CD4-positive, alpha-beta memory T cell (primary cell): ENCODE measurements at regions of chr16 and their contacts with region 1.

Region 1: DNA sequence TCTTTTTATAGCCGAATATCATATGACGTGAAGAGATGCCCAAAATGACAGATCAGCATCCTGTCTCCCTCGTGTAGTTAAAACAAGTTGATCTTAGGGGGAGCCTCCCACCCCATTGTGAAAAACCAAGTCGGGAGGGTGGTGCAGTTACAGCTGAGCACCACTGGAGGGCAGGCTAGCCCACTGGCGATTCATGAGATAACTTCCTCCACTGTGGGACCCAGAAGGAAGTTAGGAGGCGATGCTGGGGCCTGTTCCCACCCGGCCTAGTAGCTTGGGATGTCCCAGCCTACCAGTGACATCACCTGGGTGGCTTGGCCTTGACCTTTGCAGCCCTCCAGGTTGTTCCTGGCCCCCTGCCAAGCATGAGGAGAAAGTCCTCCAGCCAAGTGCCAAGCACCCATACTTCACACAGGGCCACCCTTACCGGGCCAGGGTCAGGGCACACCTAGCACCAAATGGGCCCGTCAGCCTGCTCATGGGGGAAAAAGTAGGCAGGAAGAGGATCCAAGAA is 8.1 kb upstream of the CPNE2 start:
- DNase-seq: peak; percentile 78 to 81 (median 79)
- H3K4me3 ChIP-seq: no peak overlapping the region
- H3K4me3 Mint-ChIP-seq: peak overlapping the region in 1 of 8 donors; percentile 30
- H3K27ac ChIP-seq: peak overlapping the region; percentile 29
- H3K27ac Mint-ChIP-seq: peak overlapping the region; percentile 85 to 95 (median 91)
- H3K4me1 ChIP-seq: peaks cover 10% of the 10 kb centered on the region
- H3K4me1 Mint-ChIP-seq: peaks cover 5 to 18% (median 11%) of the 10 kb centered on the region in 4 donors
- H3K27me3 ChIP-seq: no peaks in the 10 kb centered on the region
- H3K27me3 Mint-ChIP-seq: no peaks in the 10 kb centered on the region

Region 2: GRCh38 chr16:56988948-56989945 is 95.1 kb before region 1 on chr16 and contains the start of gene NLRC5:
- CTCF ChIA-PET with region 1: interaction called, 8 read pairs
- POLR2A ChIA-PET with region 1: interaction called, 10 read pairs
- intact Hi-C with region 1: no loop called
- DNase-seq: peak; percentile 85 to 94 (median 89)
- H3K4me3 ChIP-seq: peak within 1 kb of the TSS; percentile 85 to 91
- H3K4me3 Mint-ChIP-seq: peak within 1 kb of the TSS; percentile 94 to 100 (median 99)
- H3K27ac ChIP-seq: peak within 1 kb of the TSS; percentile 97
- H3K27ac Mint-ChIP-seq: peak within 1 kb of the TSS; percentile 89 to 100 (median 98)
- H3K4me1 ChIP-seq: peaks cover 72% of the 10 kb centered on the region
- H3K4me1 Mint-ChIP-seq: peaks cover 50 to 96% (median 64%) of the 10 kb centered on the region in 4 donors
- H3K27me3 ChIP-seq: no peaks in the 10 kb centered on the region
- H3K27me3 Mint-ChIP-seq: no peaks in the 10 kb centered on the region
- total RNA-seq, gene NLRC5: 416 to 457 TPM

Region 3: DNA sequence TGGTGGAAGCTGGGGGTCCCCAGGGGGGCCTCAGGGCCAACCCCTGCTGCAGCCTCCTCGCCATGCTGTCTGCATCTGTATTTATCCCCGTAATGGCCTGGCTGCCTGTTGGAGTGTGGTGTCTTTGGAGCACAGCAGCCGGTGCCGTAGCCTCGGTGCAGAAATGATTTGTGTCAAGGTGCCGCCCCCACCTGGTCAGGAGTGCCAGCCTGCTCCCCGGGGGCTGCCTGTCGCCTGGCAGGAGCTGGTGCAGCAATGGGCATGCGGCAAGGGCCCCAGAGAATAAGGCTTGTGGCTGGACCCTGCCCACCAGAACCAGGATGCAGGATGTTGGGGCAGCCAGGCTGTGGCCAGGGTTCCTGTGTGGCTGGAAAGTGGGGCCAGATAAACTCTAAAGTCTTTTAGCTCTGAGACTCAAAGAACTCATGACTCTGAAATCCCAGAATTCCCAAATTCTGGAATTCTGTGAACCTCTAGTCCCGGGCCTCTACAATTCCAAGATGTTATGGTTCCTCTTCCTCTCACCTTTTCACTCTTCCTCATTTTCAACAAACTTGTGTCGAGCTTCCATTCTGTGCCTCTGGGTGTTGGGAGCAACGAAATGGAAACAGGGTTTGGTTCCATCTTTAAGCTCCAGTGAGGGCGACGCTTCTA is 14.0 kb after region 1 on chr16:
- CTCF ChIA-PET with region 1: interaction called, 44 read pairs
- POLR2A ChIA-PET with region 1: interaction called, 14 read pairs
- intact Hi-C with region 1: no loop called
- DNase-seq: no peak
- H3K4me3 ChIP-seq: no peak overlapping the region
- H3K4me3 Mint-ChIP-seq: no peak overlapping the region
- H3K27ac ChIP-seq: no peak overlapping the region
- H3K27ac Mint-ChIP-seq: peak overlapping the region in 1 of 7 donors; percentile 76
- H3K4me1 ChIP-seq: peaks cover 5% of the 10 kb centered on the region
- H3K4me1 Mint-ChIP-seq: peaks cover 7 to 20% (median 11%) of the 10 kb centered on the region in 4 donors
- H3K27me3 ChIP-seq: no peaks in the 10 kb centered on the region
- H3K27me3 Mint-ChIP-seq: peaks cover 0 to 5% of the 10 kb centered on the region in 2 donors

Region 4: GRCh38 chr16:57134982-57135381 is 50.7 kb after region 1 on chr16:
- CTCF ChIA-PET with region 1: interaction called, 23 read pairs
- POLR2A ChIA-PET with region 1: interaction called, 6 read pairs
- intact Hi-C with region 1: no loop called
- DNase-seq: peak in 4 of 5 donors; percentile 37 to 57 (median 50)
- H3K4me3 ChIP-seq: peak overlapping the region; percentile 33 to 52
- H3K4me3 Mint-ChIP-seq: peak overlapping the region; percentile 81 to 90 (median 87)
- H3K27ac ChIP-seq: peak overlapping the region; percentile 61
- H3K27ac Mint-ChIP-seq: peak overlapping the region; percentile 73 to 97 (median 93)
- H3K4me1 ChIP-seq: peaks cover 66% of the 10 kb centered on the region
- H3K4me1 Mint-ChIP-seq: peaks cover 27 to 87% (median 64%) of the 10 kb centered on the region in 4 donors
- H3K27me3 ChIP-seq: no peaks in the 10 kb centered on the region
- H3K27me3 Mint-ChIP-seq: no peaks in the 10 kb centered on the region

Region 5: DNA sequence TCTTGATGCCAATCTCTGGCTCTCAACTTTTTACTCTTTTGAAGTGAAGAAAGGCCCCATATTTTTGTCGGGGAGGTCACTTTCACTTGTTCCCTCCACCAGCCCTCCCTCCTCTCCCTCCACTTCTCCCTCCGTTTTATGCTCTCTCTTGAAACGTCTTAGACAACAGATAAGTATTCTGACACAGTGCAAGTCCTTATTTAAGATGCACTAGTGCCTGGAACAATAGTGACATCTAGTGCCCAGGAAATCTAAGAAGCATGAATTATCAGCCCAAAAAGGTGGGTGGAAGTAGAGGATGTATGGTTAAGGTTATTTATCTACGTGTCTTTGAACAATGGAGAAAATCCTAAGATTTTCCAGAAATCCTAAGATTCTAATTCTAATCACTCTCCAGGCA is 83.6 kb after region 1 on chr16:
- CTCF ChIA-PET with region 1: interaction called, 60 read pairs
- POLR2A ChIA-PET with region 1: interaction called, 3 read pairs
- intact Hi-C with region 1: loop called (anchors 1 kb)
- DNase-seq: peak; percentile 52 to 72 (median 65)
- H3K4me3 ChIP-seq: no peak overlapping the region
- H3K4me3 Mint-ChIP-seq: no peak overlapping the region
- H3K27ac ChIP-seq: no peak overlapping the region
- H3K27ac Mint-ChIP-seq: peak overlapping the region in 2 of 7 donors; percentile 26 to 32
- H3K4me1 ChIP-seq: peaks cover 5% of the 10 kb centered on the region
- H3K4me1 Mint-ChIP-seq: peaks cover 9 to 16% (median 11%) of the 10 kb centered on the region in 4 donors
- H3K27me3 ChIP-seq: no peaks in the 10 kb centered on the region
- H3K27me3 Mint-ChIP-seq: no peaks in the 10 kb centered on the region

Region 6: GRCh38 chr16:57316390-57317017 is 232.2 kb after region 1 on chr16:
- CTCF ChIA-PET with region 1: no interaction called
- POLR2A ChIA-PET with region 1: no interaction called
- intact Hi-C with region 1: no loop called
- DNase-seq: no peak
- H3K4me3 ChIP-seq: no peak overlapping the region
- H3K4me3 Mint-ChIP-seq: no peak overlapping the region
- H3K27ac ChIP-seq: no peak overlapping the region
- H3K27ac Mint-ChIP-seq: no peak overlapping the region
- H3K4me1 ChIP-seq: peaks cover 10% of the 10 kb centered on the region
- H3K4me1 Mint-ChIP-seq: peaks cover 12 to 18% (median 16%) of the 10 kb centered on the region in 4 donors
- H3K27me3 ChIP-seq: no peaks in the 10 kb centered on the region
- H3K27me3 Mint-ChIP-seq: peaks cover 0 to 2% of the 10 kb centered on the region in 2 donors

Region 7: GRCh38 chr16:57422026-57422944 is 338.0 kb after region 1 on chr16:
- CTCF ChIA-PET with region 1: interaction called, 7 read pairs
- POLR2A ChIA-PET with region 1: no interaction called
- intact Hi-C with region 1: loop called (anchors 1 kb)
- DNase-seq: no peak
- H3K4me3 ChIP-seq: no peak overlapping the region
- H3K4me3 Mint-ChIP-seq: no peak overlapping the region
- H3K27ac ChIP-seq: no peak overlapping the region
- H3K27ac Mint-ChIP-seq: peak overlapping the region in 1 of 7 donors; percentile 53
- H3K4me1 ChIP-seq: peaks cover 5% of the 10 kb centered on the region
- H3K4me1 Mint-ChIP-seq: peaks cover 5 to 16% (median 10%) of the 10 kb centered on the region in 4 donors
- H3K27me3 ChIP-seq: no peaks in the 10 kb centered on the region
- H3K27me3 Mint-ChIP-seq: no peaks in the 10 kb centered on the region

Region 8: GRCh38 chr16:57535680-57536305 is 451.5 kb after region 1 on chr16:
- CTCF ChIA-PET with region 1: no interaction called
- POLR2A ChIA-PET with region 1: no interaction called
- intact Hi-C with region 1: no loop called
- DNase-seq: peak; percentile 89 to 95 (median 93)
- H3K4me3 ChIP-seq: peak overlapping the region in 1 of 2 donors; percentile 51
- H3K4me3 Mint-ChIP-seq: peak overlapping the region; percentile 80 to 91 (median 83)
- H3K27ac ChIP-seq: peak overlapping the region; percentile 92
- H3K27ac Mint-ChIP-seq: peak overlapping the region; percentile 96 to 99 (median 98)
- H3K4me1 ChIP-seq: peaks cover 76% of the 10 kb centered on the region
- H3K4me1 Mint-ChIP-seq: peaks cover 60 to 76% (median 69%) of the 10 kb centered on the region in 4 donors
- H3K27me3 ChIP-seq: no peaks in the 10 kb centered on the region
- H3K27me3 Mint-ChIP-seq: no peaks in the 10 kb centered on the region